Gastrocnemius medialis (tissue), 4 donors: ENCODE measurements at regions of chr1 and their contacts with region 1.

Region 1: GRCh38 chr1:117685936-117686806 is 80.3 kb downstream of the TENT5C start:
- DNase-seq: peak; percentile 87 to 91
- ATAC-seq: peak; percentile 69 to 76
- H3K4me3 ChIP-seq: no peak overlapping the region
- H3K27ac ChIP-seq: peak overlapping the region; percentile 84 to 95 (median 94)
- H3K4me1 ChIP-seq: peaks cover 57 to 60% of the 10 kb centered on the region in 2 donors
- H3K27me3 ChIP-seq: no peaks in the 10 kb centered on the region
- CTCF ChIP-seq: peak in 4 of 5 experiments; percentile 12 to 39 (median 34)
- POLR2A ChIP-seq: peak in 1 of 2 donors; percentile 66

Region 2: DNA sequence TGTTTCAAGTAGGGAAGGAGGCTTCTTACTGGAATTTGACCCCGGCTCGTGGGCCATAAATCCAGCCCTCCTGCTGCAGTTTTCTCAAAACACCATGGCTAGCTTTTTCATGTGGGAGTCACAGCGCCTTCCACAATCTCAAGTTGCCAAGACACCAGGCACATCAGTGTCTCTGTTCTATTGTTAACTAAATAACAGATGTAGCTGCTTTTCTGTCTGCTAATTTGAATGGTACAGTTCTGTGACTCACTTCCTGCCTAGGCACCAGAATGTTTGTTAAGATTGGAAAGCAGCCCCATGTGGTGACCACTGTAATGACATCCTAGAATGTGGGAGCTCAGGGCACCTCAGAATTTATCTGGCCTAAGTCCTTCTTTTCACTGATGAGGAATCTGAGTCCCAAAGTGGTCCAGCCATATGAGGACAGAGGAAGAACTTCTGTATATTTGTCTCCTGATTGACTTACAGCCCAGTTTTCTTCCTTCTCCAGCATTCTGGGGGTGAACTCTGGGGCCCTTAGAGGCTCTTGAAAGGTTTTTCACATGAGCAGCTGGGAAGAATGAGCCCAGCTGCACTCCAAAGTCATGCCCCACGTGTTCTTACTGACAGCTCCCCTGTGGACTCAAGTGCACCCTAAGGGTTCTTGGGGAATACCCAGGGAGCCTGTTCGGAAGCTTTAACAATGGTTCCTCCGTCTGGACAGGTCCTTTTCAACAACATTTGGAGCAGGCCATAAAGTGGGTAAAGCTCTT is 592.1 kb before region 1 on chr1:
- in situ Hi-C with region 1: no loop called
- intact Hi-C with region 1: loop called (anchors 10 kb)
- DNase-seq: no peak
- ATAC-seq: peak in 1 of 2 donors; percentile 37
- H3K4me3 ChIP-seq: no peak overlapping the region
- H3K27ac ChIP-seq: peak overlapping the region; percentile 93 to 96 (median 94)
- H3K4me1 ChIP-seq: peaks cover 27 to 56% of the 10 kb centered on the region in 2 donors
- H3K27me3 ChIP-seq: no peaks in the 10 kb centered on the region
- CTCF ChIP-seq: peak in 3 of 5 experiments; percentile 13 to 32 (median 26)
- POLR2A ChIP-seq: no peak

Region 3: GRCh38 chr1:117622726-117623125 is 63.4 kb before region 1 on chr1:
- in situ Hi-C with region 1: no loop called
- intact Hi-C with region 1: no loop called
- DNase-seq: peak; percentile 46 to 74
- ATAC-seq: peak; percentile 88 to 98
- H3K4me3 ChIP-seq: no peak overlapping the region
- H3K27ac ChIP-seq: peak overlapping the region; percentile 47 to 73 (median 70)
- H3K4me1 ChIP-seq: peaks cover 39 to 58% of the 10 kb centered on the region in 2 donors
- H3K27me3 ChIP-seq: no peaks in the 10 kb centered on the region
- CTCF ChIP-seq: peak in 4 of 5 experiments; percentile 40 to 54 (median 46)
- POLR2A ChIP-seq: no peak

Region 4: GRCh38 chr1:117714546-117714945 is 28.4 kb after region 1 on chr1:
- in situ Hi-C with region 1: no loop called
- intact Hi-C with region 1: loop called (anchors 2 kb)
- DNase-seq: no peak
- ATAC-seq: no peak
- H3K4me3 ChIP-seq: no peak overlapping the region
- H3K27ac ChIP-seq: no peak overlapping the region
- H3K4me1 ChIP-seq: peaks cover 0 to 6% of the 10 kb centered on the region in 2 donors
- H3K27me3 ChIP-seq: no peaks in the 10 kb centered on the region
- CTCF ChIP-seq: no peak
- POLR2A ChIP-seq: no peak

Region 5: GRCh38 chr1:117821782-117822447 is 135.7 kb after region 1 on chr1:
- in situ Hi-C with region 1: no loop called
- intact Hi-C with region 1: loop called (anchors 5 kb)
- DNase-seq: peak; percentile 42 to 55
- ATAC-seq: peak; percentile 66 to 80
- H3K4me3 ChIP-seq: peak overlapping the region in 2 of 4 donors; percentile 6 to 20
- H3K27ac ChIP-seq: peak overlapping the region; percentile 85 to 90 (median 86)
- H3K4me1 ChIP-seq: peaks cover 26 to 28% of the 10 kb centered on the region in 2 donors
- H3K27me3 ChIP-seq: no peaks in the 10 kb centered on the region
- CTCF ChIP-seq: no peak
- POLR2A ChIP-seq: no peak

Region 6: GRCh38 chr1:118294875-118295642 is 608.9 kb after region 1 on chr1:
- in situ Hi-C with region 1: no loop called
- intact Hi-C with region 1: loop called (anchors 10 kb)
- DNase-seq: peak; percentile 31 to 77
- ATAC-seq: peak; percentile 0 to 32
- H3K4me3 ChIP-seq: no peak overlapping the region
- H3K27ac ChIP-seq: peak overlapping the region; percentile 84 to 99 (median 89)
- H3K4me1 ChIP-seq: peaks cover 82% of the 10 kb centered on the region in 2 donors
- H3K27me3 ChIP-seq: no peaks in the 10 kb centered on the region
- CTCF ChIP-seq: no peak
- POLR2A ChIP-seq: no peak